HCT116 (cell line): ENCODE measurements at regions of chr2 and their contacts with region 1.

Region 1: DNA sequence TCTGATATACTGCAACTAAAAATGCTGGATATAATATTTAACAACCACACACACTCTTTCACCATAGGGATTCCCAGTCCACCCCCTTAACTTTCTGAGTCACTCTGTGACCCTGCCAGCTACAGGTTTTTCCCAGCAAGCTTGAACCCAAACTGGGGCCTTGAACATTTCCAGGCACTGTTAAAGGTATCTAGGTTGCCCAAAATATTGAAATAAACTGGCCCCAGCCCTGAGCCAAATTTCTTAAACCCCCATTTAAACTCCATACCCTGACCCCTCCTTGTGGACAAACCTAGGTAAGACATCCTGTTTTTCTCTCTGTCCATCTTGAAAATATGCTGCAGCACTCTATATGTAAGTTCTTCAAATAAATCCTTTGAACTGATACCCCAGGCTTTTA is 19.7 kb upstream of the DCTN1 start:
- DNase-seq: peak; percentile 51
- ATAC-seq: peak; percentile 92
- H3K4me3 ChIP-seq: no peak overlapping the region
- H3K27ac ChIP-seq: no peak overlapping the region
- H3K4me1 ChIP-seq: peaks cover 0 to 5% of the 10 kb centered on the region in 2 experiments; a peak in 1 of 4 replicates
- H3K27me3 ChIP-seq: no peaks in the 10 kb centered on the region
- CTCF ChIP-seq: peak; percentile 63 to 72 (median 72)
- POLR2A ChIP-seq: no peak
- RAD21 ChIP-seq: peak; percentile 69

Region 2: GRCh38 chr2:74250189-74250631 is 149.6 kb before region 1 on chr2:
- CTCF ChIA-PET with region 1: interaction called, 6 read pairs
- POLR2A ChIA-PET with region 1: no interaction called
- RAD21 ChIA-PET with region 1: no interaction called
- intact Hi-C with region 1: loop called (anchors 5 kb)
- DNase-seq: peak; percentile 36
- ATAC-seq: peak; percentile 92
- H3K4me3 ChIP-seq: no peak overlapping the region
- H3K27ac ChIP-seq: no peak overlapping the region
- H3K4me1 ChIP-seq: no peaks in the 10 kb centered on the region
- H3K27me3 ChIP-seq: no peaks in the 10 kb centered on the region
- CTCF ChIP-seq: peak; percentile 67 to 83 (median 81); a peak in 5 of 6 replicates
- POLR2A ChIP-seq: no peak
- RAD21 ChIP-seq: peak; percentile 69